ENCODE measurements at regions of chr13 and their contacts with region 1.

Region 1: DNA sequence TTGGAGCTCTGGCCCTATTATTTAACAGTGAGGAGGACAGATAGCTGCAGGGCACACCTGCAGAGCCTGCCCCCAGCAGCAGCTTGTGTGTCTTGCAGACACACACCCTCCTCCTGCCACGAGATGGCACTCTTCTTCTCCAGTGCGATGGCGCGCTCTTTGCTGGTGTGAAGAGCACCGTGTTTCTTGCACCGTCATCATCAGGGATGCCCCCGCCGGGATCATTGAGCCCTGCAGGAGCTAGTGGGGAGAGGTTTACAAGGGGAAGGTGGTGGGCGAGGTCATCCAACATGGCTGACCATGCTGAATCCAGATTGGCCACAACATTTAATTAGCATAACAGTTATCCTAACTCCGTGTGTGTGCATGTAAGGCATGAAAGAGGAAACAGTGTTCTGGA is 105.6 kb downstream of the RAB20 start:
- DNase-seq: peak; percentile 95
- CTCF ChIP-seq: peak; percentile 97

Region 2: GRCh38 chr13:109918179-109918711 is 537.7 kb before region 1 on chr13:
- in situ Hi-C with region 1: no loop called
- DNase-seq: no peak
- CTCF ChIP-seq: no peak

Region 3: DNA sequence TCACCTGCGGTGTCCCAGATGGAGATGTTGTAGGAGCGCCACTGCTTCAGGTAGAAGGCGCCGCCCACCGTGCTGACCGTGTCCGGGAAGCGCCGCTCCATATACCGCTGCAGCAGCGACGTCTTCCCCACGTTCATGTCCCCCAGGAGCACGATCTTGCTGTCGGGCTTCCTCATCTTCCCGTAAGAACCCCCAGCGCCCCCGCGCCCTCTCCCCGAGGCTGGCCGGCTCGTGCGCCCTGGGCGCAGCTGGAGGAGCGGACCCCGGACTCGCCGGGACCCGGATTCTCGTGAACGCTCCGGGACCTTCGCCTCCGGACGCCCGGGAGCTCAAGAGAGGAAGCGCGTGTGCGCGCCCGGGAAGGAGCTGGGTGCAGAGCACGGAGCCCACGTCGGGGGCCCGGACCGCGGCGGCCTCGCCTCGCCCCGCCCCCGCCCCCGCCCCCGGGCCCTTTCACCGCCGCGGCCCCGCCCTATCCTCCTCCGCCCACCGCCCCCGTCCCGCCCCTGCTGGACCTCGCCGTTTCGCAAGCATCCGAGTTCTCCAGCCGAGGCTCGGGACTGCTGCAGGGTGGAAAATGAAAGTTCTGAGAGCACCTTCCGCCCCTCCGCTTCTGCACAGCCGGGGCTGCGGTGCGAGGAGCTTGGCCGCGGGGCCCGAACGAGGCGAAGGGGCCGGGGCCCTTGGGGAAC is 105.5 kb after region 1 on chr13 and contains the start of gene RAB20:
- in situ Hi-C with region 1: loop called (anchors 25 kb)
- DNase-seq: peak; percentile 91
- CTCF ChIP-seq: no peak

Measured in GM13977 (cell line).